ENCODE measurements at regions of chr7 and their contacts with region 1.

Region 1: DNA sequence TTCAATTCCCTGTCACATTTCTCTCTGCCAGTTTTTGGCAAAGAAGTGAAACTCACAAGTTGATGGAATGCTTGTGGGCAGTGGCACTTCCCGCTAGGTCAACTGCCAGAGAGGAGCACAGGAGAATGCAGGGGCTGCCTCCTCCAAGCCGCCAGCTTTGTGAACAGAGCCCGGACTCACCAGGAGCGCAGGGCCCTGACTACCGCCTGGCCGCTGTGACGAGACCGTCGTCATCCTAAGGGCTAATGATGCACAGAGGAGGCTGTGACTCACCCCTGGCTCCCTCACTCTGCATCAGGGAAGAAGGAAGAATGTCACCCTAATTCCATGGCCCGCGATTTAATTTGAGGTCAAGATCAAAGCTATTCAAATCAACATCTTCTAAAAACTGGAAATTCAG is 123.9 kb downstream of the TAX1BP1 start:
- DNase-seq: peak; percentile 41 to 64
- H3K4me3 ChIP-seq: no peak overlapping the region
- H3K27ac ChIP-seq: no peak overlapping the region
- H3K4me1 ChIP-seq: no peaks in the 10 kb centered on the region
- H3K27me3 ChIP-seq: no peaks in the 10 kb centered on the region
- CTCF ChIP-seq: no peak

Region 2: GRCh38 chr7:26291699-26292538 is 1572.0 kb before region 1 on chr7 and contains the start of gene SNX10:
- CTCF ChIA-PET with region 1: no interaction called
- POLR2A ChIA-PET with region 1: interaction called, 12 read pairs
- intact Hi-C with region 1: no loop called
- DNase-seq: peak; percentile 59 to 76
- H3K4me3 ChIP-seq: peak within 1 kb of the TSS; percentile 88
- H3K27ac ChIP-seq: no peak within 1 kb of the TSS
- H3K4me1 ChIP-seq: peaks cover 13% of the 10 kb centered on the region
- H3K27me3 ChIP-seq: no peaks in the 10 kb centered on the region
- CTCF ChIP-seq: peak; percentile 61; the same call in 1 of the 2 replicates
- total RNA-seq, gene SNX10: 9.1 and 9.8 TPM in 2 replicates

Measured in PC-9 (cell line).